ENCODE measurements at regions of chr15 and their contacts with region 1.

Region 1: DNA sequence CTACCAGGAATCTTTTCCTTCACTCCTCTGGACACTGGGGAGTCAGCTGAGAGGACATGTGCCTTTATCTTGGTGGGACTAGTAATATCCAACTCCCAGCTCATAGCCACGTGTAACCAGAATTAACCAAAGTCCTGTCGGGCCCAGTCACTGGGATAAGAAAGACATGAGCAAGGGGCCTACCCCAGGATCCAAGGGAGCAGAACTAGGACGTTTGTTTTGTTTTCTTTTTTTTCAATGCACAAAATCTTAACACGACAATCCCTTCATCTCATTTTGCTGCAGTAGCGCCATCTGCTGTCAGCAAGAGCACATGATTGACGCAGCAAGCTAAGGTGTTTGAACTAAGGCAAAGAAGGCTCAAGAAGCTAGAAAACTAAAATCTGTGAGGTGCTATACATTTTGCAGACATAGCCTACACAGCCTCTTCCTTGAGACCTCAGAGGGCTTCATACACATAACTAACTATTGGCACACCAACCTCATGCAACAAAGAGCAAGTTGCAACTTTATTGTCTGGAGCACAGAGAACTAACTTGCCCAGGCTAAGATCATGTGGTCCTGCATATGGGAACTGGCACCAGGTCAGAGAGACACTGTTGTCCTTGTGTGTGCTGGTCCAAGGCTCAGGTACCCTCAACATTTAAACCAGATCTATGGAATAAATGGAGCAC is 43.6 kb downstream of the RLBP1 start:
- DNase-seq: peak; percentile 47 to 71
- ATAC-seq: peak; percentile 14 to 53 (median 28)
- H3K4me3 ChIP-seq: no peak overlapping the region
- H3K27ac ChIP-seq: peak overlapping the region; percentile 13
- H3K4me1 ChIP-seq: no peaks in the 10 kb centered on the region
- H3K27me3 ChIP-seq: no peaks in the 10 kb centered on the region
- CTCF ChIP-seq: peak; percentile 78

Region 2: DNA sequence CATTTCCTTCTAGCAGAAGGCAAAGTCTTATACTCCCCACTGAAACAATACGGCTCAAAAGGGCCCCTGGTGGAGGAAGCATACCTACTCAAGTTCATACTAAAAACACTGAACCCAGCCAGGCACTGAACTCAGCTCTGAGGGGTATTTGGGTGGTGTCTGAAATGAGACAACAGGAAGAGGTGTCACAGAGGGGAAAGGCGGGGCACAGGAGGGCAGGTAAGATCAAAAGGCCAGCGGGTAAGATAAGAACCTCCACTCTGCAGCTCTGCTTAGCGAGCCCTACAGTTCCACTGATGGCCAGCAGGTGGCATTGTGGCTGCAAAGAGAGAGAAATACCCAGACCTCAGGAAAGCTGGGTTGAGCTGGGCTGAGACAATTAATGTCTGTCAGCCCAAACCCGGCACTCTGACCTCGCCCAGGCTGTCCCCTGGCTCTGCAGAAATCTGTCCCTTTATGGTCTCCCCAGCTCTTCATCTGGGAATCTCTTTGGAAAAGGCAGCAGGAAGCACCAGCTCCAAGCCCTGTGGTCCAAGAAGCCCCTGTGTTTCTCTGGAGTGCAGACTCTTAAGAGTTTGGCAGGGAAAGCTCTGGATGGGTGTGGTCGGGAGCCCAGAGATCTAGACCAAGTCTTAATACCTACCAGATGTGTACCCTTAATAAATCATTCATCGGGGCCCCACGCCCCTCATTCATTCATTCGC is 273.0 kb before region 1 on chr15:
- intact Hi-C with region 1: loop called (anchors 10 kb)
- DNase-seq: peak; percentile 81 to 91
- ATAC-seq: peak; percentile 51 to 83 (median 74)
- H3K4me3 ChIP-seq: no peak overlapping the region
- H3K27ac ChIP-seq: peak overlapping the region; percentile 48
- H3K4me1 ChIP-seq: peaks cover 81% of the 10 kb centered on the region
- H3K27me3 ChIP-seq: no peaks in the 10 kb centered on the region
- CTCF ChIP-seq: peak; percentile 100

Region 3: DNA sequence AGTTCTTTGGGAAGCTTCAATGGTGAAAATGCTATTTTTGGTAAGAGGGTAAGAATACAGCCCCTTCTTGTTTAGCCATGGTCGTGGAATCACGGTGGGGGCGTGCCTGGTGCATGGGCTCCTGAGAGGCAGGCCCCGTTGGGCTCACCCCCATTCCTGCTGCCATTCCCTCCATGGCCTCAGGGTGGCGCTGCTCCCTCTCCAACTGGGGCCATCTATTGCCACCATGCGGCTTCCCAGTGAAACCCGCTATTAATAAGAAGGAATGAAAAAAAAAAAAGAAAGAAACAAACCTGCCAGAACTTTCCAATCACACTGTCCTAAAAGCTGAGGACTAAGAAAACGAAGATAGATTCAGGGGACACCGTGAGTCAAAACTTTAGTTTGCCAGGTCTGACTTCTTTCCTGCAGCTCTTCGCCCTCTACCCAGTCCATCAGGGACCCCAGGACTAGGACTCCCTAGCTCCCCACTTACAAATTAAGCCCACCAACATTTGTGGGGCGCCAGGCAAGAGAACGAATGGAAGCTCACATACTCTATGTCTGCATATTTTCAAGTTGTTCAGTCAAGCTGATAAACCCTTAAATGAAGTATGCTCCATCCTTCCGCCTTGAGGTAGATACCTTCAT is 120.2 kb before region 1 on chr15:
- intact Hi-C with region 1: loop called (anchors 1 to 5 kb)
- DNase-seq: peak; percentile 81 to 89
- ATAC-seq: peak; percentile 91 to 98 (median 93)
- H3K4me3 ChIP-seq: no peak overlapping the region
- H3K27ac ChIP-seq: no peak overlapping the region
- H3K4me1 ChIP-seq: peaks cover 2% of the 10 kb centered on the region
- H3K27me3 ChIP-seq: no peaks in the 10 kb centered on the region
- CTCF ChIP-seq: peak; percentile 99

Region 4: DNA sequence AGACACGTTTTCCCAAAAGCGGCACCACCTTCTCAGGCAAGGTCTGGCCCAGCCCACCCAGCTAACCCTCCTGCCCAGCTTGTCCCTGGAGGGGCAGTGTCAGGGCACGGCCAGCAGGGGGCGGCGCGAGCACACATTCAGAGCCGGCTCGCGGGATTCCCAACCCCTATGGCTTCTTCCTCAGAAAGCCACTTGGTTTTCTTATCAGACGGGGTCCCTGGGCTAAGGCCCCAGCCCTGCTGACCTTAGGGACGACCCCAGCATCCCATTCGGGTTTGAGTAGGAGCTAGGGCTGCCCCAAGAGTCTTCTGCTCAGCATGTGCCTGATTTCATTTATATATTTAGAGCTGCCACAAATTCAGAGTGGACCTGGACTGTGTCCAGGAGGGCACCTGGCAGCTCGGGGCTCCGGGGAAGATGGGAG is 29.1 kb after region 1 on chr15:
- intact Hi-C with region 1: no loop called
- DNase-seq: peak; percentile 72 to 81
- ATAC-seq: peak; percentile 77 to 82 (median 78)
- H3K4me3 ChIP-seq: peak overlapping the region; percentile 32
- H3K27ac ChIP-seq: no peak overlapping the region
- H3K4me1 ChIP-seq: peaks cover 4% of the 10 kb centered on the region
- H3K27me3 ChIP-seq: no peaks in the 10 kb centered on the region
- CTCF ChIP-seq: peak; percentile 93